AG04450 (cell line): ENCODE measurements at regions of chr9 and their contacts with region 1.

Region 1: GRCh38 chr9:26326473-26327044 is 566.0 kb downstream of the CAAP1 start:
- DNase-seq: peak; percentile 50
- H3K4me3 ChIP-seq: no peak overlapping the region
- H3K27ac ChIP-seq: no peak overlapping the region
- H3K27me3 ChIP-seq: no peaks in the 10 kb centered on the region
- CTCF ChIP-seq: peak; percentile 87

Region 2: DNA sequence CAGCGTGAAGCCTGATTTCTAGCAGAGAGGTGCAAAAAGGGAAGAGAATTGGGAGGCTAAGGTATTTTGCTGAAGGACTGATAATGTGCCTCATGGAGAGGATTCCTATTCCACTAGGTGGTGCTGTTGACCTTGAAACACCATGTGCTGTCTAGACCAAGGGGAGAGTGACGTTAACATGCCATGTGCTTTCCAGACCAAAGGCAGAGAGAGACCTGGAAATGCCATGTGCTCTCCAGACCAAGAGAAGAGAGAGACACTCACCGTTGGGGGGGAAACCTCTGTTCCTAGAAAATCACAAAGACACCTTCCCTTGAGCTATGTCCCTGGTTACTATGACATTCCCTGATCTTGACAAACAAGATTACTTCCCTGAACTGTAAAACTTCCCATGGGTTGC is 362.3 kb before region 1 on chr9:
- CTCF ChIA-PET with region 1: interaction called, 67 read pairs
- POLR2A ChIA-PET with region 1: no interaction called
- DNase-seq: peak; percentile 21
- H3K4me3 ChIP-seq: no peak overlapping the region
- H3K27ac ChIP-seq: no peak overlapping the region
- H3K27me3 ChIP-seq: no peaks in the 10 kb centered on the region
- CTCF ChIP-seq: peak; percentile 69

Region 3: DNA sequence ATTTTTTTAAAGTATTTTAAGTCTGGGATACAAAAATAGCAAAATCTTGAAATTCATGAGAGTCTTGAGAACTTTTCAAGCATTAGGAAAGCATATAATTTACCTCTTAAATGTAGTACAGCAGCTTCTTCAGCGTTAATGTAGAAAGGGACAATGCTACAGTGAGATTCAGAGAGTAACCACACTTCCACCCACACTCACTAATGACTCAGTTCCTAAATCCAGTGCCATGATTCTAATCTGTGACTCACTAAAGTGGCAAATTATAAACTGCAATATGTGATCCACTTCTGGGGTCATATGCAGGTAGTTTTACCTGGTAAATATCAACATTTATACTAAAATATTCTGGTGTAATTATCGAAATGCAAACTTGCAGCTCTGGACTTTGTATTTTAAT is 213.8 kb before region 1 on chr9:
- CTCF ChIA-PET with region 1: interaction called, 10 read pairs
- POLR2A ChIA-PET with region 1: no interaction called
- DNase-seq: no peak
- H3K4me3 ChIP-seq: no peak overlapping the region
- H3K27ac ChIP-seq: no peak overlapping the region
- H3K27me3 ChIP-seq: no peaks in the 10 kb centered on the region
- CTCF ChIP-seq: no peak

Region 4: DNA sequence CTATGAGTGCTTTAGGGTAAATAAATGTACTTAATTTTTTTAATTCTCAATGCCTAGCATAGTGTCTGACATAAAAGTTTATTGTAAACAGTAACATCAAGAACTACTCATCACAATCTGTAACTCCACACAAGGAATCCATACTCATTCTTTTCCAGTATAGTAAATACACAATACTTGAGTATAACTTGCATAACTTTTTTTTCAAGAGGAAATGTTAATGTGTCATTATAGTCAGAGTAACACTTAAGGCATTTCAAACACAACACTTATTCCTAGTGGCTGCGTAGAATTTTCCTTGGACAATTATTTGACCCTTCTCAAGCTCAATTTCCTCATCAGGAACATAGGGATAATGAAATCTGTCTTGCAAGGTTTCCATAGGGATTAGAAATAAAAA is 18.2 kb before region 1 on chr9:
- CTCF ChIA-PET with region 1: interaction called, 14 read pairs
- POLR2A ChIA-PET with region 1: interaction called, 7 read pairs
- DNase-seq: no peak
- H3K4me3 ChIP-seq: no peak overlapping the region
- H3K27ac ChIP-seq: no peak overlapping the region
- H3K27me3 ChIP-seq: no peaks in the 10 kb centered on the region
- CTCF ChIP-seq: no peak